ENCODE measurements at regions of chr4 and their contacts with region 1.

Region 1: DNA sequence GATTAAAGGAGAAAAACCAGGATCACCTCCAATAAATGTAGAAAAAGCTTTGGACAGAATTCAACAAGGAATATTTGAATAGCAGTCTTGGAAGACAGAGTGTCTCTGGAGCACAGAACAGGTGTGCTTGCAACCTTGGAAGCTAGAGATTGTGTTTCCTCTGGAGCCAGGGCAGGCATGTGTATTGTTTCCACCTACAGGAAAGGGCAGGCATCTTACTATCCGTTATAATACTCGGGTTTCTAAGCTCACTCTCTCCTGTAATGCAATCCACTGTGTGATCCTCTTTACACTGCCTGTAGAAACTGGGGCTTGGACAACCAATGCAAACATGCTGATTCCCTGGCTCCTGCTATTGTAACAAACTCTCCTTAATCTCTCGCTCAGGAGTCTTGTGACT is 14.4 kb downstream of the CCDC110 start:
- DNase-seq: no peak
- H3K4me3 ChIP-seq: no peak overlapping the region
- H3K27ac ChIP-seq: no peak overlapping the region
- H3K4me1 ChIP-seq: no peaks in the 10 kb centered on the region
- H3K27me3 ChIP-seq: peaks cover 26% of the 10 kb centered on the region
- CTCF ChIP-seq: no peak

Region 2: DNA sequence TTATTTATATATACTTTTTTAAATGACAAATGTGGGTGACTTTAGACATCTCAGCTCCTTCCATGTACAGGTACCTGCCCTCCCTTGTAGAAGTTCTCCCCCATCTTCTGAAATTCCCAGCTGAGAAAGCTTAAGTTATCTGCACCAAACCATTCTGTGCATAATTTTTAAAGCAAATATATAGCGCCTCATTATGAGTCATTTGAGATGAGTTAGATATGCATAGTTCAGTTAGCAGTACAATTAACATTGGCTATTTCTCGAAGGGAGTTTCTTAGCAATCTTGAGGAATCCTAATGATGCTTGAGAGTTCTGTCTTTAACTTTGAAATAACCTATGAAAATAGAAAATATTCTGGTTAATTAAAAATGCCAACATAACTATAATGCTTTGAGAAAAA is 11.9 kb before region 1 on chr4:
- CTCF ChIA-PET with region 1: no interaction called
- POLR2A ChIA-PET with region 1: interaction called, 27 read pairs
- intact Hi-C with region 1: no loop called
- DNase-seq: no peak
- H3K4me3 ChIP-seq: no peak overlapping the region
- H3K27ac ChIP-seq: no peak overlapping the region
- H3K4me1 ChIP-seq: no peaks in the 10 kb centered on the region
- H3K27me3 ChIP-seq: no peaks in the 10 kb centered on the region
- CTCF ChIP-seq: no peak

Region 3: DNA sequence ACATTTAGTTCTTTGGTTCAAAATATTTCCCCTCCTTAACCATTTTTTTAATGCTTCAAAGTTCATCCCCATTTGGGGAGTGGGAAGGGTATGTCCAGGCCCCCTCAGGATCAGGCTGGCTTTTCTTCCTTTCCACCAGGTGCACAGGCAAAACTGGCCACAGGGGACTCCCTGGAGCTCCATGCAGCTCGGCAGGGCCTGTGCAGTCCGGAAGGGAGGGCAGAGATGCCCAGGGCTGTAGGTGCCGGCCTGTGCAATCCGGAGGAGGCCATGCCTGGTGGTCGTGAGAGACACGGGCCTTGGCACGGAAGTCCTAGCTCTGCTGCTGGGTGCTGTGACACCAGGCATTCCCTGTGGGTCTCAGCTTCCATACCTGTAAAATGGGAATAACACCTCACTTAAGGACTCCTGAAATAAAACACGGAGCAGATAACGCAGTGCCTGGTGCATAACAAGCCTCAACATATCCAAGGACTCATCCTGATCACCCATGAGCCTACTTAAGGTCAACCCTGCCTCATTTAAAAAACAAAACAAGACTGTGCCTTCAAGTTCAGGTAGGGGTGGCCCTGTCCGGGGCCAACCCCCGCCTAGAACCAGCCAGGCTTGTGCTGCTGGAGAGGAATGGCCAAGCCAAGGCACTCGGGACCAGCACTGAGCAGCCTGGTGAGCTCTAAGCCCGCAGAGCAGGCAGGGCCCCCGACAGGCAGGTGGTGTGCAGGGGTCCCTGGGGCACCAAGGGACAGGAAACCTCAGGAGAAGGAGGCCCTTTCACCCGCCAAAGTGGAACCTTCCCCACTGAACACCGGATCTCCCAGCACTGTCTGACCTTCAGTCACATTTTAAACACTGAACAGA is 713.0 kb after region 1 on chr4:
- CTCF ChIA-PET with region 1: no interaction called
- POLR2A ChIA-PET with region 1: no interaction called
- intact Hi-C with region 1: no loop called
- DNase-seq: no peak
- H3K4me3 ChIP-seq: no peak overlapping the region
- H3K27ac ChIP-seq: no peak overlapping the region
- H3K4me1 ChIP-seq: peaks cover 6% of the 10 kb centered on the region
- H3K27me3 ChIP-seq: no peaks in the 10 kb centered on the region
- CTCF ChIP-seq: no peak

Measured in A673 (cell line).